ENCODE measurements at regions of chr18 and their contacts with region 1.

Region 1: GRCh38 chr18:839224-840022 is 27.4 kb upstream of the YES1 start:
- DNase-seq: peak; percentile 45
- H3K4me3 ChIP-seq: no peak overlapping the region
- H3K27ac ChIP-seq: no peak overlapping the region
- H3K27me3 ChIP-seq: no peaks in the 10 kb centered on the region
- CTCF ChIP-seq: peak; percentile 99

Region 2: DNA sequence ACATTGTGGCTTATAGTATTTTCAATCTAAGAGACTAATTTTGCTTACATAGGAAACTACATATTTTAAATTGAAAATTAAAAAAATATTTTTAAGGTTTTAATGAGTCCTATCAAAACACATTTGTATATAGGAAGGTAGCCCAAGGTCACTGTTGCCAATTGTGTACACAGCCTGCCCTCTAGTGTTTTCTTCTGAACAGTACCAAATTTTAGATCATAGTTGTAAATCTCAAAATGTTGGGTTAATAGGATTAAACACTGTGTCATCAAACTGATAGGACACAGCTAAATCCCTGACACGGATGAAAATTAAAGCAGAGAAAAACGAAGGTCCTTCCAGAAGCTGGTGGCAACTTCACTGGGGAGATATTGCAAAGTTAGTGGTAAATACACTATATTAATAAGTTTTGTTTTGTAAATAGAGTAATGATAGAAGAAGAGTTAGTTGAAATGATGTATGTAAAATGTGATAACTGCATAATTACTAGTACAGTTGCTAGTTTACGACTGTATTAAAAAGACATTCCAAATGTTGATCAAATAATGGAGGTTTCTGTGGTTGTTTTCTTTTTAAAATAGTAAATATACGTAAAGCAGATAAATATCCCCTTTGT is 222.9 kb before region 1 on chr18:
- CTCF ChIA-PET with region 1: interaction called, 129 read pairs
- POLR2A ChIA-PET with region 1: interaction called, 4 read pairs
- DNase-seq: no peak
- H3K4me3 ChIP-seq: no peak overlapping the region
- H3K27ac ChIP-seq: no peak overlapping the region
- H3K27me3 ChIP-seq: peaks cover 29% of the 10 kb centered on the region
- CTCF ChIP-seq: peak; percentile 78

Region 3: GRCh38 chr18:741931-742512 is 97.4 kb before region 1 on chr18:
- CTCF ChIA-PET with region 1: interaction called, 239 read pairs
- POLR2A ChIA-PET with region 1: no interaction called
- DNase-seq: peak; percentile 15
- H3K4me3 ChIP-seq: no peak overlapping the region
- H3K27ac ChIP-seq: no peak overlapping the region
- H3K27me3 ChIP-seq: no peaks in the 10 kb centered on the region
- CTCF ChIP-seq: peak; percentile 72

Region 4: GRCh38 chr18:812376-813171 is 26.8 kb before region 1 on chr18:
- CTCF ChIA-PET with region 1: interaction called, 13 read pairs
- POLR2A ChIA-PET with region 1: no interaction called
- DNase-seq: peak; percentile 41
- H3K4me3 ChIP-seq: peak overlapping the region; percentile 90
- H3K27ac ChIP-seq: peak overlapping the region; percentile 92
- H3K27me3 ChIP-seq: peaks cover 4% of the 10 kb centered on the region
- CTCF ChIP-seq: no peak

Region 5: DNA sequence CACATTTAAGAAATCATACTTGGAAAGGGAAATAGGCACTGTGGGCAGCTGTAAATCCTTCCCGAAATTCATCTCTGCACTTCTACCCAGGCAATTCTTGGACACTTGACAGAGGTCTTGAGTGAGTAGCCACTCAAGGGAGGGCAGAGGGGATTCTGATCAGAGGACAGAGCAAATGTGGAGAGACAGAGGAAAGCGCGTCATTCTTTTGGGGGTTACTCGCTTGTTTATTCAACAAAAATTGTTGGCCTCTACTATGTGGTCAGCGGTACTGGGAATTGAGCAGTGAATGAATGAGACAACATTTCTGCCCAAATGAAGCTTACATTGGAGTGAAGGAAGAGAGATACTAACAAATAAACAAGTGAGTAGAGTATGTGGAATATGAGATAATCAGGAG is 14.0 kb after region 1 on chr18:
- CTCF ChIA-PET with region 1: interaction called, 18 read pairs
- POLR2A ChIA-PET with region 1: no interaction called
- DNase-seq: no peak
- H3K4me3 ChIP-seq: no peak overlapping the region
- H3K27ac ChIP-seq: no peak overlapping the region
- H3K27me3 ChIP-seq: no peaks in the 10 kb centered on the region
- CTCF ChIP-seq: no peak

Region 6: DNA sequence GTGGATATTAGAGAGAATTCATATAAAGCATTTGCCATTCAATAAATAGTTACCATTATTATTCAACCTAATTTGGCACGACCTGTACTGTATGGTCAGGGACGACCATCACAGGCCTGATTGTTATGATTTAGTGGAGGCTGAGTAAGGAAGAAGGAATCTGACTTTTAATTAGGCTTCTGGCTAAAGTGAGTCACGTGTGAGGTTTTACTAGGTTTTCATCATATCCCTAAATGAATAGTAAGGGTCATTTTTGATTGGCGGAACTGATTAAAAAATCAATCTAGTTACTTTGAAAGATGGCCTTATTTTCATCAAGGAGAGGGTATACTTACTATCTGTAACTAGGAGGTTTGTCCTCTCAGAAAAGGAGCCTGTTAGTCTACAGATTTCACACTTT is 208.6 kb after region 1 on chr18:
- CTCF ChIA-PET with region 1: no interaction called
- POLR2A ChIA-PET with region 1: no interaction called
- DNase-seq: no peak
- H3K4me3 ChIP-seq: no peak overlapping the region
- H3K27ac ChIP-seq: no peak overlapping the region
- H3K27me3 ChIP-seq: no peaks in the 10 kb centered on the region
- CTCF ChIP-seq: no peak